Right ventricle myocardium inferior (tissue), 1 donor: ENCODE measurements at regions of chr5 and their contacts with region 1.

Region 1: DNA sequence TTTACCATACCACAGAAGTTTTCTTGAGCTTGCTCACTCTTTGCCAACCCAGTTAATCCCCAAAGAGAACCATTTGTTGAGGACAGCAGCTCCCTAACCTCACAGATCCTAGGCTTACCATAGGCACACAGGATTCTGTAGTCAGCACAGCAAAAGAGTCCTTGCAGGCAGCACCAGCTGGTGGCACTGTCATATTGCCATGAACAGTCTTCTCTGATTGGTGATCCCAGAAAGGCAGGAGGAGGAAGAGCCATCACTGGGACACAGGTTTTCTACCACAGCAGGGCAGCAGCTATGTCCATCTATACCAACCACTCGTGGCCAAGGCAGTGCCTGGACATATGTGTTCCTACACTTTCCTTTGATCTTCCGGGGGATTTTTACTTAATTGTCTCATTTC is 297.1 kb upstream of the CD180 start:
- DNase-seq: peak; percentile 63
- ATAC-seq: peak; percentile 90

Region 2: GRCh38 chr5:67305913-67306710 is 187.6 kb before region 1 on chr5:
- intact Hi-C with region 1: no loop called
- DNase-seq: no peak
- ATAC-seq: no peak

Region 3: DNA sequence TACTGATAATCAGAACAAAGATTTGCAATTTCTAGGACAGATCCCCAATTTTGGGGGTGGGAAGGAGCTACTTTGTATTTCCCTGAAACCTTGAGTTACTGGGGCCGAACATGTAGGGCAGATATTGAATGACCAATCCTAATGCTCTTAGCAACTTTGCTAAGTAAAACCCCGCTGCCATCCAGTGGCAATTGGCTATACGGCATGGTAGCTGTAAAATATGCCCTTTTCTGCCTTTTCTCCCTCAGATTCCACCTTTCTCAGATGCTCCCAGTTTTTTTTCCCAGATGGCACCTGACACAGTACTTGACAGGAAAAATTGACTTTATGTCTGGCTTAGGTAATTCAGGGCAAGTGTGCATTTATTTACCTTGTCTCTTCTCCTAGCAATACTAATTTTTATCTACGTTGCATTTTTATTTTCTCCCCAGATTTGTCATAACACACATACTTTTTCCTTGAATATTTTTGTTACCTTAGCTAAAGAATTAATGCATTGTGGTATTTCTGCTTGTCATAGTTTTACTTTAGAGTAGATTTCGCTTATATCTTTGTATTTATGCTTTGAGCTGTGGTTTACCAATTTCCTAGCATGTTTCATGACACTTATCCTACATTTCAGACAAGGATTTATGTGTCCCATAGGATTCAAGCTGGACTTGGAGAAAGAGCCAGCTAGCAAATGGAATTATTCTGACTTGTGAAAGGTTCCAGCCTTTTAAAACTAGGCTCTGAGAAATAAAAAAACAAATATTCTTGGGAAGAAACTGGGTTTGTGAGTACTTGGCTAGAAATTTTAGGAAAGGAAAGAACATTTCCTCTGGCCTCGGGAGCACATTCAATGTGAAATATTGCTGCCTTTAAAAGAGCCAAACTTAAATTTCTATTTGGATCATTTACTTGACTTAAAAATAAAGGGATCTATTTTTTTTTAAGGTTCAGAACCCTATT is 759.3 kb after region 1 on chr5:
- intact Hi-C with region 1: loop called (anchors 5 kb)
- DNase-seq: no peak
- ATAC-seq: peak; percentile 59